A673 (cell line): ENCODE measurements at regions of chr3 and their contacts with region 1.

Region 1: GRCh38 chr3:9422712-9423424 is 25.5 kb downstream of the SETD5 start:
- DNase-seq: peak; percentile 96
- H3K4me3 ChIP-seq: peak overlapping the region; percentile 16
- H3K27ac ChIP-seq: peak overlapping the region; percentile 93
- H3K4me1 ChIP-seq: peaks cover 56% of the 10 kb centered on the region
- H3K27me3 ChIP-seq: no peaks in the 10 kb centered on the region
- CTCF ChIP-seq: peak; percentile 63

Region 2: DNA sequence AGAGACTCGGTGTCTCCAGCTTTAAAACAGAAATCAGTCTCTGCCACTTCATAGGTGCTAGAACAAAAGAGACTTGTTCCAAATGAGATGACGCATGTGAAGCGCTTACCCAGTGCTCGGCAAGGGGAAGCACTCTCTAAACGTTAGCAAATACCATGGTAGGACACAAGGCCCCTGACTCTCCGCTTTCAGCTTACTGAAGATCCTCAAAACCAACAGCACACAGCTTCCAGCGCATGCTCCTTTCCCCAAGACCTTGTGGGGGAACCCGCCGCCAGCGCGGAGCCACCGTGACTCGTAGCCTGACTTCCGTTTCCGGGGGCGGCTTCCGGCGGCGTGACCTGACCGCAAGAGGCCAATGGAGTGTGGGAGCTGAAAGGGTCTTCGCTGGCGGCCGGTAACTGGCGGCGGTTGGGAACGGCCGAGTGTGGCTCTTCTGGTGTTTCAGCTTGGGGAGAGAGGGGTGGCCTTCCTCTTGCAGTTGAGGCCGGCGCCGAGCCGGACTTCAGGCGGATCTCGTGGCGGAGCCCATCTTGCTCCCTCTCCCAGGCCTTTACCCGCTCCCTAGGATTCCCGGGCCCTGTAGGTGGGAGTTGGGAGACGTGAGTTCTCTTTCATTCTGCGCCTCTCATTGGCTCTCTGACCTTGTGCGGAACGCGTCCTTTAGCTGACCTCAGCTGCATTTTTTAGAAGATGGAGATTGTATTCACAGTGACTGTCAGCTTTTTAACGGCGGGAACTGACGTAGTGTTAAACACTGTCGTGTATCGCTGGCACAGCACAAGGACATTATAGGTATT is 59.9 kb before region 1 on chr3 and contains the start of gene THUMPD3:
- CTCF ChIA-PET with region 1: no interaction called
- POLR2A ChIA-PET with region 1: no interaction called
- intact Hi-C with region 1: loop called (anchors 2 kb)
- DNase-seq: peak; percentile 96
- H3K4me3 ChIP-seq: peak within 1 kb of the TSS; percentile 68
- H3K27ac ChIP-seq: peak within 1 kb of the TSS; percentile 85
- H3K4me1 ChIP-seq: peaks cover 11% of the 10 kb centered on the region
- H3K27me3 ChIP-seq: no peaks in the 10 kb centered on the region
- CTCF ChIP-seq: no peak
- total RNA-seq, gene THUMPD3: 79.2 and 84.6 TPM in 2 replicates

Region 3: GRCh38 chr3:9387322-9387655 is 35.6 kb before region 1 on chr3:
- CTCF ChIA-PET with region 1: no interaction called
- POLR2A ChIA-PET with region 1: no interaction called
- intact Hi-C with region 1: loop called (anchors 5 kb)
- DNase-seq: no peak
- H3K4me3 ChIP-seq: no peak overlapping the region
- H3K27ac ChIP-seq: no peak overlapping the region
- H3K4me1 ChIP-seq: no peaks in the 10 kb centered on the region
- H3K27me3 ChIP-seq: no peaks in the 10 kb centered on the region
- CTCF ChIP-seq: no peak